ENCODE measurements at regions of chr12 and their contacts with region 1.

Region 1: GRCh38 chr12:127125607-127126259 is 1141.2 kb upstream of the TMEM132C start:
- DNase-seq: peak; percentile 80
- H3K4me3 Mint-ChIP-seq: no peak overlapping the region
- H3K27ac Mint-ChIP-seq: peak overlapping the region; percentile 61
- H3K4me1 Mint-ChIP-seq: peaks cover 9% of the 10 kb centered on the region
- H3K27me3 Mint-ChIP-seq: peaks cover 16% of the 10 kb centered on the region

Region 2: DNA sequence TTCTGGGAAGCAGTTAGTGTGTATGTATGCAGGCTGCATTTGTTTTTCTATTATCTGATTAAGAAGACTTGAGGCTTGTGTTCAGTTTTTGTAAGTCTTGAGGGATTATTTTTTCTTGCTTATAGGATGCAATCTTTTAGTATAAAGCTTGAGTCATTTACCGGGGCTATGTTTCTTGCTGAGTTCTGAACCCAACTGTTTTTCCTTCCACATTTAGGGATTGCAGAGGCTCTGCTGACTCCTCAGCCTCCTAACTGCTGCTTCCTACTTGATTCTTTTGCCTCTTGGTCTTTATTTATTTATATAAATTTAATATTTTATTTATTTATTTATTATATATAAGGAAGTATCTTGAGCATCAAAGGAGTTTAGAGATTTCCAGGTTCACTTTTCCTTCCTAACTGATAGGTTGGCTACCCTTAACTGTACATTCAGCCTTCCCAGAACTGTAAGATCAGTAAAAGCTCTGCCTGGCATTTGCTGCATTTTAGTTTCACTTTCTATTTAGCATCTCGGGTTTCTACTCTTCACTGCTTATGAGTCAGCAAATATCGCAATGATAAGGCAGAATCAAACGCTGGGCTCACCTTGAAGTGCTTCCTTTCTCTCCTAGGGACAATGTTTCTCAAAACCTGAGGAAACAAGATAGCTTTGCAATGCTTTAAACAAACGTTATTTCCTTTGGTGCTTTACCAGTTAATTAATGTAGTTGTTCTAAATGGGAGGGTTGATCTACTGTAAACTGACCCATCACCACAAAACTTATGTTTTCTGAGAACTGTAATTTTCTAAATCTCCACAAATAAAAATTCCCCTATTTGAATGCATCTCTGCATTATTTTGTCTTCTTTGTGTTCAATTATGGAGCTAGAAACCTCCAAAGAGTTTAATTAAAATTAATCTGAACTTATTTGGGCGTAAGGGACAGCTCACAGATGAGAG is 42.5 kb before region 1 on chr12:
- CTCF ChIA-PET with region 1: no interaction called
- POLR2A ChIA-PET with region 1: no interaction called
- intact Hi-C with region 1: loop called (anchors 2 kb)
- DNase-seq: peak; percentile 20
- H3K4me3 Mint-ChIP-seq: peak overlapping the region; percentile 36
- H3K27ac Mint-ChIP-seq: no peak overlapping the region
- H3K4me1 Mint-ChIP-seq: peaks cover 14% of the 10 kb centered on the region
- H3K27me3 Mint-ChIP-seq: peaks cover 4% of the 10 kb centered on the region

Region 3: GRCh38 chr12:127145929-127146789 is 20.4 kb after region 1 on chr12:
- CTCF ChIA-PET with region 1: no interaction called
- POLR2A ChIA-PET with region 1: no interaction called
- intact Hi-C with region 1: loop called (anchors 2 kb)
- DNase-seq: peak; percentile 76
- H3K4me3 Mint-ChIP-seq: peak overlapping the region; percentile 76
- H3K27ac Mint-ChIP-seq: peak overlapping the region; percentile 73
- H3K4me1 Mint-ChIP-seq: peaks cover 6% of the 10 kb centered on the region
- H3K27me3 Mint-ChIP-seq: peaks cover 11% of the 10 kb centered on the region

Region 4: GRCh38 chr12:127165567-127166392 is 40.0 kb after region 1 on chr12:
- CTCF ChIA-PET with region 1: interaction called, 3 read pairs
- POLR2A ChIA-PET with region 1: no interaction called
- intact Hi-C with region 1: loop called (anchors 1 kb)
- DNase-seq: peak; percentile 87
- H3K4me3 Mint-ChIP-seq: peak overlapping the region; percentile 74
- H3K27ac Mint-ChIP-seq: no peak overlapping the region
- H3K4me1 Mint-ChIP-seq: peaks cover 23% of the 10 kb centered on the region
- H3K27me3 Mint-ChIP-seq: peaks cover 16% of the 10 kb centered on the region

Region 5: DNA sequence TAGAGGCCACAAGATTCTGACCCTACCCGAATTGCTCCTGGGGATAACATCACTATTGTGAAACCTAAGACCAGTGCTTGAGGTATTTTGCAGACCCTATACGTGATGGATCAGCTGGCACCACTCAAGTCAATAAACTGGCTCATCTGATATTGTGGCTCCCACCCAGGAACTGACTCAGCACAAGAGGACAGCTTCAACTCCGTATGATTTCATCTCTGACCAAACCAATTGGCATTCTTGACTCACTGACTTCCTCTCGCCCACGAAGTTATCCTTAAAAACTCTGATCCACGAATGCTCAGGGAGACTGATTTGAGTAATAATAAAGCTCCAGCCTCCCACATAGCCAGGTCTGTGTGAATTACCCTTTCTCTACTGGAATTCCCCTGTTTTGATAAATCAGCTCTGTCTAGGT is 105.1 kb after region 1 on chr12:
- CTCF ChIA-PET with region 1: no interaction called
- POLR2A ChIA-PET with region 1: no interaction called
- intact Hi-C with region 1: loop called (anchors 10 kb)
- DNase-seq: peak; percentile 12
- H3K4me3 Mint-ChIP-seq: no peak overlapping the region
- H3K27ac Mint-ChIP-seq: no peak overlapping the region
- H3K4me1 Mint-ChIP-seq: no peaks in the 10 kb centered on the region
- H3K27me3 Mint-ChIP-seq: peaks cover 2% of the 10 kb centered on the region